H1 (cell line): ENCODE measurements at regions of chr11 and their contacts with region 1.

Region 1: DNA sequence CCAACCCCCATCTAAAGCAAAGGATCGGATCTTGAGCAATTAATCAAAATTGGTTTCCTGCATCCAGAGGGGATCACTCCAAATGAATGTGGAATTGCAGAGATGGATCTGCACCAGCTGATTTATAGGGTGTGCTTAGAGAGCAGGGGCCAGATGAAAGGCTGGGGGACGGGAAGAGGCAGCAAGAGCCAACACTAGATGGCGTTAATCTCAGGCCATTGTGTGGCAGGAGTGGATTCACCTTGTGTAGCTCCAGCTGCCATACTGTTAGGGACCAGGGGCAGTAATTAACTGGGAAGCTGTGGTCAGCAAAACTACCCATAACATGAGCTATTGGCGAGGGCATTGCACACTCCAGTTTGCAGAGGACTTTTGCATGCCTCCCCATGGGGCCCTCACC is 35.6 kb downstream of the SERPINH1 start:
- DNase-seq: no peak
- H3K4me3 ChIP-seq: no peak overlapping the region
- H3K27ac ChIP-seq: no peak overlapping the region
- H3K4me1 ChIP-seq: peaks cover 0 to 4% (median 0%) of the 10 kb centered on the region in 4 experiments; a peak in 2 of 7 replicates
- H3K27me3 ChIP-seq: peaks cover 0 to 3% (median 0%) of the 10 kb centered on the region in 4 experiments; a peak in 1 of 7 replicates
- CTCF ChIP-seq: peak; percentile 78 to 93 (median 90)
- EP300 ChIP-seq: no peak
- POLR2A ChIP-seq: no peak
- RAD21 ChIP-seq: peak; percentile 68 to 74

Region 2: GRCh38 chr11:75468534-75469340 is 128.9 kb before region 1 on chr11:
- CTCF ChIA-PET with region 1: no interaction called
- POLR2A ChIA-PET with region 1: no interaction called
- DNase-seq: no peak
- H3K4me3 ChIP-seq: no peak overlapping the region
- H3K27ac ChIP-seq: no peak overlapping the region
- H3K4me1 ChIP-seq: peaks cover 0 to 7% (median 3%) of the 10 kb centered on the region in 4 experiments; a peak in 5 of 7 replicates
- H3K27me3 ChIP-seq: no peaks in the 10 kb centered on the region
- CTCF ChIP-seq: no peak
- EP300 ChIP-seq: no peak
- POLR2A ChIP-seq: no peak
- RAD21 ChIP-seq: no peak

Region 3: GRCh38 chr11:75577207-75577606 is 20.4 kb before region 1 on chr11:
- CTCF ChIA-PET with region 1: interaction called, 22 read pairs
- POLR2A ChIA-PET with region 1: interaction called, 1,120 read pairs
- DNase-seq: peak in 1 of 2 experiments; percentile 88
- H3K4me3 ChIP-seq: no peak overlapping the region
- H3K27ac ChIP-seq: no peak overlapping the region
- H3K4me1 ChIP-seq: peaks cover 0 to 5% (median 2%) of the 10 kb centered on the region in 4 experiments; a peak in 4 of 7 replicates
- H3K27me3 ChIP-seq: no peaks in the 10 kb centered on the region
- CTCF ChIP-seq: peak; percentile 61 to 80 (median 61)
- EP300 ChIP-seq: no peak
- POLR2A ChIP-seq: no peak
- RAD21 ChIP-seq: peak in 1 of 2 experiments; percentile 40; a peak in 1 of 4 replicates

Region 4: GRCh38 chr11:75611823-75612222 is 14.2 kb after region 1 on chr11:
- CTCF ChIA-PET with region 1: interaction called, 25 read pairs
- POLR2A ChIA-PET with region 1: interaction called, 5 read pairs
- DNase-seq: no peak
- H3K4me3 ChIP-seq: no peak overlapping the region
- H3K27ac ChIP-seq: no peak overlapping the region
- H3K4me1 ChIP-seq: no peaks in the 10 kb centered on the region
- H3K27me3 ChIP-seq: no peaks in the 10 kb centered on the region
- CTCF ChIP-seq: no peak
- EP300 ChIP-seq: no peak
- POLR2A ChIP-seq: no peak
- RAD21 ChIP-seq: no peak

Region 5: GRCh38 chr11:75656044-75656727 is 58.5 kb after region 1 on chr11:
- CTCF ChIA-PET with region 1: interaction called, 10 read pairs
- POLR2A ChIA-PET with region 1: no interaction called
- DNase-seq: no peak
- H3K4me3 ChIP-seq: no peak overlapping the region
- H3K27ac ChIP-seq: no peak overlapping the region
- H3K4me1 ChIP-seq: peaks cover 0 to 4% (median 0%) of the 10 kb centered on the region in 4 experiments; a peak in 1 of 7 replicates
- H3K27me3 ChIP-seq: no peaks in the 10 kb centered on the region
- CTCF ChIP-seq: no peak
- EP300 ChIP-seq: no peak
- POLR2A ChIP-seq: no peak
- RAD21 ChIP-seq: no peak

Region 6: DNA sequence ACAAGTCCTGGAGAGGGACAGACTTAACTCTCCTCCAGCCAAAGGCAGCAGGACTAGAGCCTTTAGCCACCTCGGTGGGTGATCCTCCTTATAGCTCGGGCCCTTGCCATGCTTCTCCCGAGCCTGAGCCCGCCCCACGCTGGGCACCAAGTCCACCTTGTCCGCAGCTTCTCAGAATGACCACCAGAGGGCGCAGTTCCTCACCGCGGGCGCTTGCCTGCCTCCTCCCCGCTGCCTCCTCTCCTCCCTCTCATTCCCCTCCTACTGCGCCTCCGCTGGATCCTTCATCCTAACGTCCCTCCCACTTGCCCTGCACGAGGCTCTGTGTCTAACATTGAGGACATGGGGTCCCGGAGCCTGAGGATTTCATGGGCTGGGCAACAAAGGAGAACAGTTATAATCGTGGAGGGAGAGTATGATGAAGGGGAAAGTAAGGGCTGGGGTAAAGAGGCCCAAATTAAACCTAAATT is 108.7 kb after region 1 on chr11:
- CTCF ChIA-PET with region 1: interaction called, 13 read pairs
- POLR2A ChIA-PET with region 1: no interaction called
- DNase-seq: peak; percentile 49 to 86
- H3K4me3 ChIP-seq: no peak overlapping the region
- H3K27ac ChIP-seq: no peak overlapping the region
- H3K4me1 ChIP-seq: no peaks in the 10 kb centered on the region
- H3K27me3 ChIP-seq: no peaks in the 10 kb centered on the region; a peak in 1 of 7 replicates
- CTCF ChIP-seq: peak; percentile 88 to 96 (median 95)
- EP300 ChIP-seq: no peak
- POLR2A ChIP-seq: no peak
- RAD21 ChIP-seq: peak; percentile 69 to 74

Region 7: GRCh38 chr11:75816561-75817239 is 219.1 kb after region 1 on chr11:
- CTCF ChIA-PET with region 1: no interaction called
- POLR2A ChIA-PET with region 1: no interaction called
- DNase-seq: no peak
- H3K4me3 ChIP-seq: peak overlapping the region; percentile 82 to 96 (median 85); a peak in 7 of 8 replicates
- H3K27ac ChIP-seq: no peak overlapping the region
- H3K4me1 ChIP-seq: peaks cover 2 to 17% (median 9%) of the 10 kb centered on the region in 4 experiments; a peak in 6 of 7 replicates
- H3K27me3 ChIP-seq: no peaks in the 10 kb centered on the region
- CTCF ChIP-seq: no peak
- EP300 ChIP-seq: no peak
- POLR2A ChIP-seq: no peak
- RAD21 ChIP-seq: no peak